Left ventricle myocardium superior (tissue), 1 donor: ENCODE measurements at regions of chr9 and their contacts with region 1.

Region 1: DNA sequence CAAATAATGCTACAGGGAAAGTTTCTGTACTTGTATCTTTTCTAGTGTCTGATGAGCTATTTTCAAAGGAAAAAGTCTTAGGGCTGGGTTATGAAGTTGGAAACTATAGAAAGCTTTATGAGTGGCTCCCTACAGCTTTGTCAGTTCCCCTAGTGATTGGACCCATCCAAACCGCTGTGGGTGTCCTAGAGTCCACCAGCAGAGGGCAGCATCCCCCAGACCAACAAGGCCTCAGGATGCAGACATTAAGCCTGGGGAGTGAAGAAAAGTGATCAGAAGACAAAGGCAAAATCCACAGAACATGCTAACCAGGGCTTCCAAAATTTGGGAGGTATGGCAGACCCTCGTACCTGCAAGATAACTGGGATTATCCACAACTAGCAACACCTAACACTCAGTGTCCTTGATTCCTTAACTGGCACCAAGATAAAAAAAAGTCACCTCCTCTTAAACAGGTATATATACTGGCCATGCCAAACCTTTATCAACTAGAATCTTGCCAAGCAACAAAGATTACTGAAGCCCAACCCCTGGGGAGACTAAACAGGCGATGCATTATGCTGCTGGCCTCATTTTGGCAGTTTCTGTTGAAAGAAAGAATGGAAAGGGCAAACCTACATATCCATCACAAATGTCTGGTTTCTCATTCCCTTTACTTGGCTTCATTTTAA is 110.4 kb upstream of the NR5A1 start:
- DNase-seq: peak; percentile 85
- ATAC-seq: peak; percentile 91

Region 2: DNA sequence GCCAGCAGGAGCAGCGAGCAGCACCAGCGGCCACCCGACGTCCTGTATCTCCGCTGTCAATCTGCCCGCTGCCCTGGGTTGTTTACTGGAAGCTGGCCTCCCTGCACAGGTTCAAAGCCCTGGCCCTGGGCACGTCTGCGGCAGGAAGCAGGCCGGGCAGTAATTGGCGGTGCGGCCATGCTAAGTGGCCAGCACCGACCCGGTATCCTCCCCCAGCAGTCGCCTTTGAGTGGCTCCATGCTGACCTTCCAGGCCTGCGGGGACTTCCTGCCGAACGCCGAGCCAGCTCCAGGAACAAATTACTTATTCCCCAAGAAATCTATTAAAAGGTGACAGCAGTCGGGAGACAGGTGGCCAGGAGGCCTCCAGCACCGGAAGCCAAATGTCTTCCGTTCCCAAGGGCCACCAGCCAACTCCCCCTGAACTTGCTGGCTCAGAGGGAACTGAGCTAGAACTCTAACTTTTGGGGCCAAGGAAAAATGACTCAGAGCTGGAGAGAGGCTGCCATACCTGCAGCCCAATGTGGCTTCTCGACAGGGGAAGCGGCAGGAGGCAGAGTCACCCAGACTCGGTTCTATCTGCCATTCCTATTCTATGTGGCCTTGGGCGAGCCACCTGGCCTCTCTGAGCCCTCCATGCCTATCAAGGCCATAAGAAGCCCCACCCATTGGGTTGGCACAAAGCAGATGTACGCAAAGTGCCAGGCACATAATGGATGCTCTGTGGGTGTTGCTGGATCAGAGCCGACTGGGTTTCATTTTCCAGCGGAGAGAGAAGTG is 188.7 kb before region 1 on chr9:
- intact Hi-C with region 1: no loop called
- DNase-seq: no peak
- ATAC-seq: no peak

Region 3: DNA sequence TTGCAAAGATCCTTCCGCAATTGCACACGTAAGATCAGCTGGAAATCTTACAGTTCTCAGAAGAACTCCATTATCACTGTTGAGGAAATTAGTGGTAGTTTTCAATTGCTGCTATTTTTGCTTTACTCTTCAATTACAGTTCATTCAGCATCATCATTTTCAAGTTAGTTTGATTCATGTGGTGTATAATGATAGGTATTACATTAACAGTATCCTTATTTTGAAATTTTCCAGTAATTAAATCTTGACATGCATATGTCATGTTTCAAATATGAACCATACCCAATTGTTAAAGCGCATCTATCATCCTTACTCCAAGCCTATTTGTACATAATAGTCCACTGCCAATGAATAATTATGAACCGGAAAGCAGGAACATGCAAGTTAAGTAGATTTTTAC is 93.2 kb after region 1 on chr9:
- intact Hi-C with region 1: loop called (anchors 2 kb)
- DNase-seq: no peak
- ATAC-seq: no peak